Ovary (tissue), 10 donors: ENCODE measurements at regions of chr13 and their contacts with region 1.

Region 1: DNA sequence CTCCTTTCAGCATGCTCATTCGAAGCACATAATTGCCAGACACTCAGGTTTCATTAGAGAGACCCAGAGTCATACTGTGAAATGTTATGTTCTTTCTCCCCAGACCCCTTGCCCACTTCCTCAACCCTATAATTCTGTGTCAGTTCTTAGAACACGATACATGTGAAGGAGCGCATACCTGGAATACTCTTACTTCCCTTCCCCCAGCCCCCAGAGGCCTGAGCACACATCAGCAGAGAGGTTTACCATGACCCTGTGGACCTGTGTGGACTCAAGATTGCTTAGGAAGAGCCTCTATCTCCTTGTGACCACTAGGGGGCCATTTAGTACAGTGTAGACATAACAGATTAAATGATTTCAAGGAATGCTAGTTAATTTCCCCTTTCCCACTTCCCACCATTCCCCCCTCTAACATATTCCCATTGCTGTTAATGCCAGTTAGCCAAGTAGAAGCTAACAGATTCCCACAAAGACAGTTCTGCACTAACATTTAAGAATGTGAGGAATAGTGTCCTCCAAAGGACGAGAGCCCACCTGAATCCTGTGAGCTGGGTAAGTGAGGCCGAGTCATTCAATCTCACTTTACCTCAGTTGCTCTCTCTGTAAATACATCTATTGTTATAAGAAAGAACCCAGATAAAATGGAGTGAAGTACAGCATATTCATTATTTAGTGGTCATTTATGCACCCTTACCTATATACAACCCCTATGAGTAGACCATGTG is 154.2 kb upstream of the MAB21L1 start:
- DNase-seq: no peak
- H3K4me3 ChIP-seq: no peak overlapping the region
- H3K27ac ChIP-seq: no peak overlapping the region
- H3K4me1 ChIP-seq: no peaks in the 10 kb centered on the region
- H3K27me3 ChIP-seq: no peaks in the 10 kb centered on the region
- CTCF ChIP-seq: peak in 1 of 3 donors; percentile 39
- EP300 ChIP-seq: no peak
- POLR2A ChIP-seq: no peak

Region 2: GRCh38 chr13:35961461-35962220 is 330.9 kb after region 1 on chr13:
- intact Hi-C with region 1: loop called in 1 of 4 experiments (anchors 10 kb)
- DNase-seq: no peak
- H3K4me3 ChIP-seq: no peak overlapping the region
- H3K27ac ChIP-seq: no peak overlapping the region
- H3K4me1 ChIP-seq: no peaks in the 10 kb centered on the region
- H3K27me3 ChIP-seq: no peaks in the 10 kb centered on the region
- CTCF ChIP-seq: no peak
- EP300 ChIP-seq: no peak
- POLR2A ChIP-seq: no peak